ENCODE measurements at regions of chr20 and their contacts with region 1.

Region 1: DNA sequence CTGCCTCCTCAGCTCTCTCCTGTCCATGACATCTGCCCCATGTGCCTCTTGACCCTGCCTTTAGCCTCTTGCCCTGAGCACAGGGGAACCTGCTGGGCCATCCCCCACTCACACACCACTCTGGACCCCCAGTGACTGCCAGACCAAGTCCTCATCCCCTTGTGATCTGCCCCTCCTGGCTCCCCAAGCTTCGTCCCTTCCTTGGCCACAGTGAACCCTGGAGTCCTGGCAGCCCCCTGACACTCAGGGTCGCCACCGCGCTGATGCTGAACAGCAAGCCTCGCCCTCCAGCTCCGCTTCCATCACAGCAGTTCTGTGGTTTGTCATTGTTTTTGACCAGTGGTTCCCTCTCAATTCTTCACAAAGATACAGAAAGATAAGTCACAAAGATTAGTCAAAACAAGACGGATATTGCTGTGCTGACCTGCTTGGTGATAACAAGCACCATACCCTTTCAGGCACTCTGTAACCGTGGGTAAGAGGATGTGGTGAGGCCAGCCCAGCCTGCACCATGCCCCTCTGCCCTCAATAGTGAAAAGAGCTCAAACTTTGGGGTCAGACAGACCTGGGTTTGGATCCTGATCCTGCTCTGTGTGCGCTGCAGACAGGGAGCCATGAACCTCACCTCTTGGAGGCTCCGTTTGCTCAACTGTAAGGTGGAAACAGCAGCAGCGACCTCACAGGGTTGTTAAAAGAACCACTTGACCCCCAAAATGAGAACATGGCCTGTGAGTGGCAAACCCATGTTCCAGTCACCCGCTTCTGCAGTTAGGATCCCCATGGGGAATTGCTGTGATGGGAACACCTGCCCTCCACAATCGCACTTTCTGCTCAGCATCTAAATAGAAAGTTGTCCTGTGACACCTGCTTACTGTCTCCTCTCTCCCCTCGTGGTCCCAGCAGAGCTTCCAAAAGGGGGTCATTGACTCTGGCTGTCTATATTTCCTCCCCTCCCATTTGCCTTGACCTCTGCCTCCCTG is 114.5 kb downstream of the TOX2 start:
- DNase-seq: peak; percentile 66
- ATAC-seq: peak; percentile 96
- H3K4me3 ChIP-seq: no peak overlapping the region
- H3K27ac ChIP-seq: peak overlapping the region; percentile 35; the same call in 1 of the 2 replicates
- H3K4me1 ChIP-seq: peaks cover 21% of the 10 kb centered on the region
- H3K27me3 ChIP-seq: no peaks in the 10 kb centered on the region
- CTCF ChIP-seq: no peak
- EP300 ChIP-seq: peak; percentile 56 to 58; a peak in 1 of 4 replicates
- POLR2A ChIP-seq: no peak
- RAD21 ChIP-seq: no peak

Region 2: GRCh38 chr20:44018259-44018941 is 10.8 kb before region 1 on chr20:
- CTCF ChIA-PET with region 1: interaction called, 9 read pairs
- POLR2A ChIA-PET with region 1: interaction called, 3 read pairs
- RAD21 ChIA-PET with region 1: interaction called, 3 read pairs
- SMC1A ChIA-PET with region 1: interaction called, 17 read pairs
- in situ Hi-C with region 1: no loop called
- intact Hi-C with region 1: no loop called
- DNase-seq: no peak
- ATAC-seq: no peak
- H3K4me3 ChIP-seq: no peak overlapping the region
- H3K27ac ChIP-seq: no peak overlapping the region
- H3K4me1 ChIP-seq: peaks cover 5% of the 10 kb centered on the region; the same call in 1 of the 2 replicates
- H3K27me3 ChIP-seq: no peaks in the 10 kb centered on the region
- CTCF ChIP-seq: no peak
- EP300 ChIP-seq: no peak
- POLR2A ChIP-seq: no peak
- RAD21 ChIP-seq: no peak

Region 3: GRCh38 chr20:44069203-44070011 is 40.2 kb after region 1 on chr20:
- CTCF ChIA-PET with region 1: no interaction called
- POLR2A ChIA-PET with region 1: interaction called, 3 read pairs
- RAD21 ChIA-PET with region 1: interaction called, 5 read pairs
- SMC1A ChIA-PET with region 1: interaction called, 4 read pairs
- in situ Hi-C with region 1: no loop called
- intact Hi-C with region 1: loop called (anchors 1 kb)
- DNase-seq: peak; percentile 57
- ATAC-seq: peak; percentile 79
- H3K4me3 ChIP-seq: peak overlapping the region; percentile 54
- H3K27ac ChIP-seq: peak overlapping the region; percentile 32; the same call in 1 of the 2 replicates
- H3K4me1 ChIP-seq: peaks cover 18% of the 10 kb centered on the region
- H3K27me3 ChIP-seq: no peaks in the 10 kb centered on the region
- CTCF ChIP-seq: no peak
- EP300 ChIP-seq: peak; percentile 77 to 91
- POLR2A ChIP-seq: peak; percentile 31; the same call in 1 of the 2 replicates
- RAD21 ChIP-seq: no peak